ENCODE measurements at regions of chr9 and their contacts with region 1.

Region 1: DNA sequence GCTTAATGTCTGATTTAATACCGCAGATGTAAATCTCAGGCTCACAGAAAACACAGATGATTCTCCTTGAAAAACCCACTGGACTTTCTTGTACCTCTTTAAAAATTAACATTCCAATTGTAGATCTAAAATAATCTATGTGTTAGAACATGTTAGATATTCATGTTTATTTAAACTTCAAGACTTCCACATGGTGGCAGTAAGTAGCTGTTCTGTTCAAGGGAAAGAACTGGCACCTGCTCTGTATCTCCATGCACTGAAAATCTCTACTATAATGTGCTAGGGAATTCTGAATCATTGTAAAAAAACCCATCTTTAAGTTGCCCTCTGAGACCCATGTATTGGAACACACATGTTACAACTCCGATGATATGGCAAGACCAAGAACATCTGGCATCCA is 366.9 kb downstream of the DMRTA1 start:
- DNase-seq: peak; percentile 37
- H3K4me3 ChIP-seq: no peak overlapping the region
- H3K27ac ChIP-seq: no peak overlapping the region
- H3K4me1 ChIP-seq: no peaks in the 10 kb centered on the region
- H3K27me3 ChIP-seq: no peaks in the 10 kb centered on the region
- CTCF ChIP-seq: peak; percentile 8 to 12
- POLR2A ChIP-seq: no peak

Region 2: GRCh38 chr9:22863106-22863505 is 49.6 kb after region 1 on chr9:
- CTCF ChIA-PET with region 1: no interaction called
- POLR2A ChIA-PET with region 1: no interaction called
- dilution Hi-C with region 1: no loop called
- intact Hi-C with region 1: no loop called
- DNase-seq: no peak
- H3K4me3 ChIP-seq: no peak overlapping the region
- H3K27ac ChIP-seq: no peak overlapping the region
- H3K4me1 ChIP-seq: no peaks in the 10 kb centered on the region
- H3K27me3 ChIP-seq: no peaks in the 10 kb centered on the region
- CTCF ChIP-seq: no peak
- POLR2A ChIP-seq: no peak

Region 3: DNA sequence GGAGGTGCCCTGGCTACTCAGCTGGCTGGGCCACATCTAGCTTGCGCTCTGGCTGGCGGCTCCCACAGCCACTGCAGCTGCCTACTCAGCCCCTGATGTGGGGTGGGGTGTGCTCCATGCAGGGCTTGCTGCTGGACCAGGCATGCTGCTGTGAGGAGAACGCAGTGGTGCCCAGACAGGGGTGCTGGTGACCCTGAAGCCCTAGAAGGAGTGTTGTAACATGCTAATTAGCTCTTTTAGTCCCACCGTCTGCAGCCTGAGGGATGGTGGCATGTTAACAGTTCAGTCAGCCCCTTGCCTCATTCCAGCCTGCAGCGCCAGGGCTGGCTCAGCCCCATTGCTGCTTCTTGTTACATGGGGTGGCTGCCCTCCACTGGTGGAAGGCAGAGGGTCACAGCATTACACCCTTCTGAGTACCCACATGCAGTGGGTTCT is 275.4 kb after region 1 on chr9:
- CTCF ChIA-PET with region 1: interaction called, 15 read pairs
- POLR2A ChIA-PET with region 1: no interaction called
- dilution Hi-C with region 1: no loop called
- intact Hi-C with region 1: loop called (anchors 1 kb)
- DNase-seq: peak; percentile 26
- H3K4me3 ChIP-seq: no peak overlapping the region
- H3K27ac ChIP-seq: no peak overlapping the region
- H3K4me1 ChIP-seq: no peaks in the 10 kb centered on the region
- H3K27me3 ChIP-seq: no peaks in the 10 kb centered on the region
- CTCF ChIP-seq: peak in 1 of 2 donors; percentile 55
- POLR2A ChIP-seq: no peak

Region 4: GRCh38 chr9:23322392-23322791 is 508.9 kb after region 1 on chr9:
- CTCF ChIA-PET with region 1: interaction called, 8 read pairs
- POLR2A ChIA-PET with region 1: no interaction called
- dilution Hi-C with region 1: no loop called
- intact Hi-C with region 1: loop called (anchors 5 kb)
- DNase-seq: no peak
- H3K4me3 ChIP-seq: no peak overlapping the region
- H3K27ac ChIP-seq: no peak overlapping the region
- H3K4me1 ChIP-seq: no peaks in the 10 kb centered on the region
- H3K27me3 ChIP-seq: no peaks in the 10 kb centered on the region
- CTCF ChIP-seq: peak; percentile 20 to 26
- POLR2A ChIP-seq: no peak

Region 5: GRCh38 chr9:23492126-23493002 is 678.8 kb after region 1 on chr9:
- CTCF ChIA-PET with region 1: interaction called, 13 read pairs
- POLR2A ChIA-PET with region 1: no interaction called
- dilution Hi-C with region 1: no loop called
- intact Hi-C with region 1: loop called (anchors 1 kb)
- DNase-seq: peak; percentile 64
- H3K4me3 ChIP-seq: no peak overlapping the region
- H3K27ac ChIP-seq: no peak overlapping the region
- H3K4me1 ChIP-seq: no peaks in the 10 kb centered on the region
- H3K27me3 ChIP-seq: no peaks in the 10 kb centered on the region
- CTCF ChIP-seq: peak; percentile 45 to 55
- POLR2A ChIP-seq: no peak

Region 6: DNA sequence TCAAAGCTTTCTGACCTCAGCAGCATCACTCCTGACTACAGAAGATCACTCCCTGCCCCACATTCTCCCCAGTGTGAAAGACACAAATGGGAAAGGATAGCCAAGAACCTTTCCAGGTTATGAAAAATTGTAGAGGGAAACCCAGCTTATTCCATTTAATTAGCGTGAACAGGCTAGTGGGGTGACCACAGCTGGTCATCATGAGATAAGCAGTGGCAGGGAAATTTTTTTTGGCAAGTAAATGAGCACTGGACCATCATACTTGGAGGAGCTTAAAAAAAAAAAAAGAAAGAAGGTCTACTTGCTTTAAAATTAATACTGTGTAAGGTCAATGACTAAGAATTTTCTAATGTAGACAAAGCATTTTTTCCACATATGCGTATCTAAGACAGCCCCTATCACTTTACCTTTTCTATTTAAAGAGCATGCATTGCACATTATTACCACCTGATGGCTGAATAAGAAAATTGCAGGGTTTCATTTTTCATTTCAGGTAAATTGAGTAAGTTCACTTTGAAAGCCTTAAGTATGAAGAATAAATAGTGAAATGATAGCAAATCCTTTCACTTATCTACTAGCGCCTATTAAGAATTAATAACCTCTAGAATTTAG is 888.9 kb after region 1 on chr9:
- CTCF ChIA-PET with region 1: interaction called, 3 read pairs
- POLR2A ChIA-PET with region 1: no interaction called
- dilution Hi-C with region 1: no loop called
- intact Hi-C with region 1: loop called (anchors 5 kb)
- DNase-seq: no peak
- H3K4me3 ChIP-seq: no peak overlapping the region
- H3K27ac ChIP-seq: no peak overlapping the region
- H3K4me1 ChIP-seq: no peaks in the 10 kb centered on the region
- H3K27me3 ChIP-seq: no peaks in the 10 kb centered on the region
- CTCF ChIP-seq: no peak
- POLR2A ChIP-seq: no peak

Region 7: GRCh38 chr9:24245988-24246387 is 1432.5 kb after region 1 on chr9:
- CTCF ChIA-PET with region 1: no interaction called
- POLR2A ChIA-PET with region 1: no interaction called
- dilution Hi-C with region 1: no loop called
- intact Hi-C with region 1: loop called (anchors 10 kb)
- DNase-seq: no peak
- H3K4me3 ChIP-seq: no peak overlapping the region
- H3K27ac ChIP-seq: no peak overlapping the region
- H3K4me1 ChIP-seq: no peaks in the 10 kb centered on the region
- H3K27me3 ChIP-seq: no peaks in the 10 kb centered on the region
- CTCF ChIP-seq: peak in 1 of 2 donors; percentile 3
- POLR2A ChIP-seq: no peak

Measured in endothelial cell of umbilical vein (primary cell).